ENCODE measurements at regions of chr9 and their contacts with region 1.

Region 1: GRCh38 chr9:100322954-100323536 is 29.7 kb downstream of the TEX10 start:
- ATAC-seq: peak in 3 of 8 experiments; percentile 27 to 43 (median 34)
- H3K4me3 ChIP-seq: no peak overlapping the region
- H3K27ac ChIP-seq: no peak overlapping the region
- H3K4me1 ChIP-seq: no peaks in the 10 kb centered on the region

Region 2: GRCh38 chr9:99162759-99163364 is 1160.2 kb before region 1 on chr9:
- in situ Hi-C with region 1: loop called in 1 of 9 experiments (anchors 25 kb)
- ATAC-seq: peak in 4 of 8 experiments; percentile 9 to 37 (median 19)
- H3K4me3 ChIP-seq: no peak overlapping the region
- H3K27ac ChIP-seq: no peak overlapping the region
- H3K4me1 ChIP-seq: peaks cover 2 to 8% of the 10 kb centered on the region in 2 donors

Region 3: DNA sequence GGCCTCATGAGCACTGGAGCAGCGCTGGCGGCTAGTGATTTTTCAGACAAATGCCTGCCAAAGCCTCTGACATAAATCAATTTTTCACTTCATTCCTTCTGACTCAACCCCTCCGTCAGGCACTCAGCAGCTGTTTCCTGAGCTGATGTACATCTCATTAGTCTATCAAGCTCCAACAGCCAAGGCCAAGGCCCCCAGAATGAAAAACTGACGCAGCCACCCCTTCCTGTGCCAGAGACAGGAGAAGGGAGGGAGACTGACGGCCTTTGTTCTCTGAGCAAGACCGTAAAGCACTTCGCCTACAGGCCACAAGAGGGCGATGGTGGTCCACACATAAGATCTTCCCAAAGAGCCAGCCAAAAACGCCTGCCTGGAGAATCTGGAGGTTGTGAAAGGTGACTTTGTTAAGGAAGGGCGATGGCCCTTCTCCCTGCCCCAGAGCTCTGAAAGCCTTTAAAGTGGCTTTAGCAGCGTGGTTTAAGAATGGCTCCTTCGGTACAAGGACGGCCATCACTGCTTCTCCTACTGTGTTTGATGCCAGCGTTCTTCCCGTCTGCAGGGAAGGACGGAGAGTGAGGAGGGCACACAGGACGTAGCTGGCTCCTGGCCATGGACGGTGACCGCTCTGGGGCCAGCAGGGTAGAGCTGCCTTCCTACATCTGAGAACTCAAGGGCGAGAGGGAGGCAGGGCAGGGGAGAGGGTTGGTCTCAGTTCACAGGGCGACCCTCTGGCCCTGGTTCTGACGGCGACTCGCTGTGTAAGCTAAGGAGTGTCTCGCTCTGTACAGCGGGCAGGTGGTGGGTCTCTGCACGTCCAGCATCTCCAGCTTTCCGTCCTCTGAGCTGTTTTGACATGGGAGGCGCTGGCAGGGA is 1138.3 kb before region 1 on chr9:
- in situ Hi-C with region 1: loop called in 2 of 9 experiments (anchors 10 to 25 kb)
- ATAC-seq: peak; percentile 90 to 99 (median 96)
- H3K4me3 ChIP-seq: no peak overlapping the region
- H3K27ac ChIP-seq: peak overlapping the region; percentile 26 to 42
- H3K4me1 ChIP-seq: peaks cover 20 to 26% of the 10 kb centered on the region in 2 donors

Region 4: GRCh38 chr9:99819856-99820684 is 503.0 kb before region 1 on chr9:
- in situ Hi-C with region 1: loop called in 1 of 9 experiments (anchors 25 kb)
- ATAC-seq: peak; percentile 32 to 70 (median 62)
- H3K4me3 ChIP-seq: peak overlapping the region; percentile 56 to 91 (median 83)
- H3K27ac ChIP-seq: peak overlapping the region; percentile 94 to 97
- H3K4me1 ChIP-seq: peaks cover 6 to 8% of the 10 kb centered on the region in 2 donors

Region 5: DNA sequence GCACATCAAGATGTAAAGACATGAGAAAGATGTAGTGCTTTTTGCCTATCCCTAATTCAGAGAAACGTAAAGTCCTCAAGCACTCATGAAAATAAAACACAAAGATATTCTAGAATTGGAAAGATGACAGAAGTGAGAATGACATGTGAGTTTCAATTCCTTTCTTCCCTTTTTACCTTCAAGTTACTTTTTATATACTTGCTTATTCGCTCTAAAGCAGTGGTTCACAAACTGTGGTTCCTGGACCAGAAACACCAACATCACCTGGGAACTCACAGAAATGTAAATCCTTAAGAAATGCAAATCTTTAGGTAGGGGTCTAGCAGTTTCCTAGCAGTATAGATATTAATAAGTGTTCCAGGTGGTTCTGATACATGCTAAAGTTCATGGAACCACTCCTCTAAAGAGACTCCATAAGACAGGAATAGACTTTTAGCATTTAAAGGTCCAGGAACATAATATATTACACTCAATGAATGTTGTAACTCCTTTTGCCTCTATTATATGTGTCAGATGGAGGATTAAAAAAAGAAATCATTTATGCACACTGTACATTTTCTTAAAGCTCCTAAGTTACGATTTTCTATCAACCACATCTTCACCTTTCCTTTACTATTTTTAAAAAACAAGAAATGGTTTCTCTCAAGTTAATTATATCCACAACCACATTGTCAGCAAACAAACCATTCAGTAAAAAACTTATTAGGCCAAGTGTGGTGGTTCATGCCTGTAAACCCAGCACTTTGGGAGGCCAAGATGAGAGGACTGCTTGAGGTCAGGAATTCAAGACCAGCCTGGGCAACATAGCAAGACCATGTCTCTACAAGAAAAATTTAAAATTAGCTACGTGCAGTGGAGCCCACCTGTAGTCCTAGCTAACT is 264.1 kb before region 1 on chr9:
- in situ Hi-C with region 1: no loop called
- ATAC-seq: no peak
- H3K4me3 ChIP-seq: no peak overlapping the region
- H3K27ac ChIP-seq: no peak overlapping the region
- H3K4me1 ChIP-seq: no peaks in the 10 kb centered on the region

Region 6: GRCh38 chr9:100598641-100599145 is 275.6 kb after region 1 on chr9:
- in situ Hi-C with region 1: loop called in 2 of 9 experiments (anchors 25 kb)
- ATAC-seq: peak; percentile 86 to 98 (median 94)
- H3K4me3 ChIP-seq: peak overlapping the region; percentile 21 to 43 (median 30)
- H3K27ac ChIP-seq: no peak overlapping the region
- H3K4me1 ChIP-seq: peaks cover 4 to 5% of the 10 kb centered on the region in 2 donors

Measured in motor neuron (in vitro differentiated cells).